Common myeloid progenitor, CD34-positive (primary cell): ENCODE measurements at regions of chr5 and their contacts with region 1.

Region 1: DNA sequence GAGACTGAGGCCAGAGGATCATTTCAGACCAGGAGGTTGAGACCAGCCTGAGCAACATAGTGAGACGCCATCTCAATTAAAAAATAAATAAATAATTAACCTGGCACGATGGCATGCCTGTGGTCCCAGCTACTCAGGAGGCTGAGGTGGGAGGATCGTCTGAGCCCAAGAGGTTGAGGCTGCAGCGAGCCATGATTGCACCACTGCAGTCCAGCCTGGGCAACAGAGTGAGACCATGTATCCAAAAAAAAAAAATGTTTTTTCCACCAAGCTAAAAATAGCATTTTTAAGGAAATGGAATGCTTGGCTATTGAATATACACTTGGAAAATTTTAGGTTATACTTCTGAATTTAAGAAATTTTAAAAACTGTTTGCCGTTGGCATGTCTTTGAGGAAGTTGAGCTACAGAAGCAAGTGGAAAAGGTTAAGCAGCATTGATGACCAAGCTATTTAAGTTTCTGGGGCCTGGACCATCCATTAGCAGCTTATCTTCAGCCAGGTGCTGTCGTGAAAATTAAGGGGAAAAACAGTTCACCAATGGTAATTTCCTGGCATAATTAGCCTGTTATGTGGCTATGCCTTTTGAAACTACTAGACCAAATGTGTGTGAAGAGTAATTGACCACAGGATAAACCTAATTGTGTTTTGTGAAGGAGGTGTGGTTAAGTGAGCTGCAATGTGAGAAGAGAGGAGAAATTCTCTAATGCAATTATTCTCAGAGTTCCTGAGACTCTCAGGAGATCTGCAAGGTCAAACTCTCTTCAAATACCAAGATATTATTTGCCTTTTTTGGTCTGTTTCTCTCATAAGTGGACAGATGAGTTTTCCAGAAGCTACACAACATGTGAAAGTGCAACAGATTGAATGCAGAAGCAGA is 21.0 kb downstream of the F2R start:
- DNase-seq: peak in 2 of 3 donors; percentile 59 to 75
- H3K4me3 ChIP-seq: no peak overlapping the region
- H3K27ac ChIP-seq: peak overlapping the region in 1 of 2 experiments; percentile 56
- H3K4me1 ChIP-seq: peaks cover 17 to 35% (median 22%) of the 10 kb centered on the region in 4 experiments
- H3K27me3 ChIP-seq: no peaks in the 10 kb centered on the region

Region 2: GRCh38 chr5:76720988-76721569 is 15.8 kb before region 1 on chr5:
- CTCF ChIA-PET with region 1: interaction called, 18 read pairs
- POLR2A ChIA-PET with region 1: no interaction called
- DNase-seq: peak in 2 of 3 donors; percentile 46 to 51
- H3K4me3 ChIP-seq: peak overlapping the region in 4 of 7 experiments; percentile 6 to 40 (median 15)
- H3K27ac ChIP-seq: peak overlapping the region; percentile 25 to 76
- H3K4me1 ChIP-seq: peaks cover 13 to 65% (median 32%) of the 10 kb centered on the region in 4 experiments
- H3K27me3 ChIP-seq: no peaks in the 10 kb centered on the region

Region 3: DNA sequence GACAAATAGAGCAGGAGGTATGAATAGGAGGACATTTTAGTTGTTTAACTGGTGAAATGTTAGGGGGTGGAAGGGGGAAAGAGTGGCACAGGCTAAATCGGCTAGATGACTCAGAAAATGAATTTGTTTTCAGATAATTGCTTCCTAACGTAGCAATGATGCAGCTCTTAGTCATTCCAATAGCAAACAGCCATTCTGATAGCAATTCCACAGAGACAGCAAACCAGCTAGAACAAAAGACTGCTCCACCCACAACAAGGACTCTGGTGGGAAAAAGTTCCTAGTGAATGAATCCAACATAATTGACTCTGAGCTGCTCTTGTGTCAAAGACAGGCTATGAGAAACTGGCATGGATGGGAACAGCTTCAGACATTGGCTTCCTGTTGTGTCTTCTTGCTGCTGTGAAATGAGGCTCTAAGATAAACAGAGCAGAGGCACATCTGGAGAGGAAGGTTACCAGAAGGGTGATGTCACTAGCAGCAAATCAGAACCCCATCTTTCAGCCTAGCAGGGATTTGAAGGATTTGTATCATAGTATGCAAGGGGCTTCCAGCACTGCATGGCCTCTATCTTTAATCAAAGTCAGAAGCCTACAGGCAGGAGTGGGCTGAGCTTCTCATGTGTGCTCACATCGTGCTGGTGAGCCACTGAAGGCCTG is 53.8 kb after region 1 on chr5:
- CTCF ChIA-PET with region 1: no interaction called
- POLR2A ChIA-PET with region 1: no interaction called
- DNase-seq: peak in 2 of 3 donors; percentile 19 to 42
- H3K4me3 ChIP-seq: no peak overlapping the region
- H3K27ac ChIP-seq: no peak overlapping the region
- H3K4me1 ChIP-seq: no peaks in the 10 kb centered on the region
- H3K27me3 ChIP-seq: no peaks in the 10 kb centered on the region

Region 4: GRCh38 chr5:76805850-76806505 is 69.1 kb after region 1 on chr5:
- CTCF ChIA-PET with region 1: no interaction called
- POLR2A ChIA-PET with region 1: no interaction called
- DNase-seq: no peak
- H3K4me3 ChIP-seq: no peak overlapping the region
- H3K27ac ChIP-seq: no peak overlapping the region
- H3K4me1 ChIP-seq: peaks cover 0 to 22% (median 2%) of the 10 kb centered on the region in 4 experiments
- H3K27me3 ChIP-seq: no peaks in the 10 kb centered on the region

Region 5: GRCh38 chr5:76941000-76941399 is 204.1 kb after region 1 on chr5:
- CTCF ChIA-PET with region 1: no interaction called
- POLR2A ChIA-PET with region 1: no interaction called
- DNase-seq: no peak
- H3K4me3 ChIP-seq: no peak overlapping the region
- H3K27ac ChIP-seq: no peak overlapping the region
- H3K4me1 ChIP-seq: peaks cover 4 to 36% (median 19%) of the 10 kb centered on the region in 4 experiments
- H3K27me3 ChIP-seq: no peaks in the 10 kb centered on the region

Region 6: GRCh38 chr5:77015938-77016569 is 279.1 kb after region 1 on chr5:
- CTCF ChIA-PET with region 1: no interaction called
- POLR2A ChIA-PET with region 1: no interaction called
- DNase-seq: peak; percentile 83 to 90 (median 88)
- H3K4me3 ChIP-seq: no peak overlapping the region
- H3K27ac ChIP-seq: no peak overlapping the region
- H3K4me1 ChIP-seq: no peaks in the 10 kb centered on the region
- H3K27me3 ChIP-seq: no peaks in the 10 kb centered on the region